ENCODE measurements at regions of chr17 and their contacts with region 1.

Region 1: DNA sequence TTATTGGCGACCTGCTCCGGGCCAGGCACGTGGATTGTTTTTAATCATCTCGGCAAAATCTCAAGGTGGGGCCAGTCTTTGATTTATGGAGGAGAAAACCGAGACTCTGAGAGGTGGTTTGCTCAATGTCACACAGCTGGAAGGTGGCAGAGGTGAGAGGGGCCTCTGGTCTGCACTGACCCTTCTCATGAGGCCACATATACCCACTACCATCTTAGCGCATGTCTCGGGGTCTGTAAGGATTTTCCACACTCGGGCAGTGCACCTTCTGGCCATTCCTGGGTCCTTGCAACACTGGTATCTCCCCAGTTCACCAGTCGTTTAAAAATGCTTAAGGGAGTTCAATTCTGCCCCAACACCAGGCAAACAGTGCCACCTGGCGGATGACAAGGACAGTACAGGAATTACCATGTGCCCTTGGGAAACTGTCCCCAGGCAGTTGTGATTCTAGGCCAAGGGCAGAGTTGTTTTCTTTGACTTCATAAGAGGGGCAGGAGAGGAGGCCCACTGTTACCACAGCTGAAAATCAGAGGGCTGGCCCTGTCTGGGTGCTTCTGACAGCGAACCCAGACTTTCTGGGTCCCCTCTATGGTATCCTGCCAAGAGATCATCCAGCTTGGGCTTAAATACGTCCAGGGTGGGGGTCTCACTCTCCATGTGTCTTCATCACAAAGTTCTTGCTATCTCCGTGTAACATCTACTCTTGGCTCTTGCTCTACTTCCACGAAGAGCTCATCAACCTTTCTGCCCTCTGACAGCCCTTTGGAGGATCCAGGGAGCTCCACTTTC is 39.4 kb upstream of the RAI1 start:
- DNase-seq: peak; percentile 86
- H3K4me3 Mint-ChIP-seq: no peak overlapping the region
- H3K27ac Mint-ChIP-seq: no peak overlapping the region
- H3K4me1 Mint-ChIP-seq: no peaks in the 10 kb centered on the region
- H3K27me3 Mint-ChIP-seq: peaks cover 5% of the 10 kb centered on the region

Region 2: GRCh38 chr17:17349168-17350106 is 292.4 kb before region 1 on chr17:
- CTCF ChIA-PET with region 1: interaction called, 110 read pairs
- POLR2A ChIA-PET with region 1: no interaction called
- intact Hi-C with region 1: no loop called
- DNase-seq: no peak
- H3K4me3 Mint-ChIP-seq: no peak overlapping the region
- H3K27ac Mint-ChIP-seq: no peak overlapping the region
- H3K4me1 Mint-ChIP-seq: no peaks in the 10 kb centered on the region
- H3K27me3 Mint-ChIP-seq: no peaks in the 10 kb centered on the region

Region 3: GRCh38 chr17:17557796-17558195 is 84.0 kb before region 1 on chr17:
- CTCF ChIA-PET with region 1: no interaction called
- POLR2A ChIA-PET with region 1: no interaction called
- intact Hi-C with region 1: no loop called
- DNase-seq: no peak
- H3K4me3 Mint-ChIP-seq: no peak overlapping the region
- H3K27ac Mint-ChIP-seq: no peak overlapping the region
- H3K4me1 Mint-ChIP-seq: no peaks in the 10 kb centered on the region
- H3K27me3 Mint-ChIP-seq: no peaks in the 10 kb centered on the region

Region 4: GRCh38 chr17:17613708-17614114 is 28.1 kb before region 1 on chr17:
- CTCF ChIA-PET with region 1: interaction called, 15 read pairs
- POLR2A ChIA-PET with region 1: no interaction called
- intact Hi-C with region 1: no loop called
- DNase-seq: peak; percentile 60
- H3K4me3 Mint-ChIP-seq: no peak overlapping the region
- H3K27ac Mint-ChIP-seq: no peak overlapping the region
- H3K4me1 Mint-ChIP-seq: no peaks in the 10 kb centered on the region
- H3K27me3 Mint-ChIP-seq: no peaks in the 10 kb centered on the region

Region 5: GRCh38 chr17:17739388-17740066 is 97.7 kb after region 1 on chr17:
- CTCF ChIA-PET with region 1: no interaction called
- POLR2A ChIA-PET with region 1: no interaction called
- intact Hi-C with region 1: no loop called
- DNase-seq: no peak
- H3K4me3 Mint-ChIP-seq: no peak overlapping the region
- H3K27ac Mint-ChIP-seq: no peak overlapping the region
- H3K4me1 Mint-ChIP-seq: peaks cover 25% of the 10 kb centered on the region
- H3K27me3 Mint-ChIP-seq: no peaks in the 10 kb centered on the region